MCF 10A (cell line): ENCODE measurements at regions of chr9 and their contacts with region 1.

Region 1: DNA sequence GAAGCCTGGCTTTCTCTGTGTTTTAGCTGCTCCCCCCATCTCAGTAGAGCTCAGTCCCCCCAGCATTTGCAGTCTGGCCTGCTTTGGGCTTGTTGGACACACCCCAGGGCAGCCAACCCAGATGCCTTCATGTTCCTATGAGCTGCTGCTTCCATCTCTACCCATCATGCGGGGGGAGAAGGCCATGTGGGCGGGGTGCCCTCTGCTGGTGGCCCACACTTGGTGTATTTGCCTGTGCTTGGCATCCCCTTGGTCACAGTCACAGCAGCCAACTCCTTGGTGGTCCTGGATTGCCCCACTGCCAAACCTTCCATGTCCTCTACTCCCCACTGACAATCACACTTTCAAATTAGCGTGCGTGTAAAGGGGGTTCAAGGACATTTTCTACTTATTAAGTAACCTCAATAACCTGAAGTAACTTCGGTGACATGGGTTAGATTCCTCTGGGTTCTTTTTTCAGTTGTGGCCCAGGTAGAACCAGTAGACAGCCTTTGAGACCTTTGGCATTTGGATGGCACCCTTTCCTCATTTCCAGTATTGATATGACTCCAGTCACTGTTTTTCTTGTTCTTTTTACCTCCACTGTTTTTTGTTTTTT is 42.8 kb downstream of the SNX30 start:
- DNase-seq: peak; percentile 71
- H3K4me3 Mint-ChIP-seq: no peak overlapping the region
- H3K27ac Mint-ChIP-seq: no peak overlapping the region
- H3K4me1 Mint-ChIP-seq: no peaks in the 10 kb centered on the region
- H3K27me3 Mint-ChIP-seq: no peaks in the 10 kb centered on the region
- CTCF ChIP-seq: peak; percentile 66

Region 2: GRCh38 chr9:111263116-111263515 is 1530.2 kb before region 1 on chr9:
- CTCF ChIA-PET with region 1: no interaction called
- POLR2A ChIA-PET with region 1: no interaction called
- intact Hi-C with region 1: no loop called
- DNase-seq: no peak
- H3K4me3 Mint-ChIP-seq: no peak overlapping the region
- H3K27ac Mint-ChIP-seq: no peak overlapping the region
- H3K4me1 Mint-ChIP-seq: no peaks in the 10 kb centered on the region
- H3K27me3 Mint-ChIP-seq: no peaks in the 10 kb centered on the region
- CTCF ChIP-seq: no peak

Region 3: GRCh38 chr9:112443200-112443599 is 350.1 kb before region 1 on chr9:
- CTCF ChIA-PET with region 1: interaction called, 3 read pairs
- POLR2A ChIA-PET with region 1: interaction called, 3 read pairs
- intact Hi-C with region 1: loop called (anchors 1 kb)
- DNase-seq: peak; percentile 24
- H3K4me3 Mint-ChIP-seq: no peak overlapping the region
- H3K27ac Mint-ChIP-seq: no peak overlapping the region
- H3K4me1 Mint-ChIP-seq: peaks cover 14% of the 10 kb centered on the region
- H3K27me3 Mint-ChIP-seq: no peaks in the 10 kb centered on the region
- CTCF ChIP-seq: peak; percentile 29

Region 4: DNA sequence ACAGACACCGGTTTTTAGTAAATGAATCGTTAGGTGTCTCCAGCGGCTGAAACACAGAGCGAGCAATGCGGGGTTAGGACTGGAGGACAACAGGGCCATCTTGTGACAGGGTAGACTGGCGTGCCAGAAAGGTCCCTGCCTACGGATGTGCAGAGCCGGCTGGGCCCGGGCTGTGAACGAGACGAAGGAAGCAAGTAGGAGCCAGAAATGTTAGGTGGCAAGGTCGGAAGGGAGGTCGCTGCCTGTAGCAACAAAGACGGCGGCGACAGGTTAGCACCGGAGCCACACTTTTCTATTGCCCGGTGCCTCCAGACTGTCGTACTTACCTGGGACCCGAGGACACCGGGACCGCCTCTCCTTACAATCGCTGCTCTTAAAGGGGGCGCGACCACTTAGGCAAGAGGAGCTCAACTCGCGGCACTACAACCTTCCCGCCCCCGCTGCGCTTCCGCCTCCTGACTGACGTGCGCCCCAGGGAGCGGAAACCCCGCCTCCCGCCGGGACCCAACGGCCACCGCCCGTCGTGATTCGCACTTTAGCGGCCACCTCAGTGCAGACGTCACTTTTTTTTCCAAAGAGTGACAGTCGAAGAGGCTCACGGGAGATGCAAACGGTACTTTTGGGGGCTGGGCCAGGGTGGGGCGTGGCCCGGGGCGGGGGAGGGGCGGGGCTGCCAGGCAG is 75.5 kb before region 1 on chr9 and contains the start of gene INIP:
- CTCF ChIA-PET with region 1: interaction called, 6 read pairs
- POLR2A ChIA-PET with region 1: no interaction called
- intact Hi-C with region 1: loop called (anchors 1 kb)
- DNase-seq: peak; percentile 97
- H3K4me3 Mint-ChIP-seq: peak within 1 kb of the TSS; percentile 100
- H3K27ac Mint-ChIP-seq: peak within 1 kb of the TSS; percentile 98
- H3K4me1 Mint-ChIP-seq: peaks cover 8% of the 10 kb centered on the region
- H3K27me3 Mint-ChIP-seq: no peaks in the 10 kb centered on the region
- CTCF ChIP-seq: peak; percentile 6
- total RNA-seq, gene INIP: 28.0 and 33.5 TPM in 2 replicates

Region 5: GRCh38 chr9:112750111-112750767 is 43.1 kb before region 1 on chr9 and contains the start of gene SNX30:
- CTCF ChIA-PET with region 1: interaction called, 3 read pairs
- POLR2A ChIA-PET with region 1: no interaction called
- intact Hi-C with region 1: loop called (anchors 1 kb)
- DNase-seq: peak; percentile 90
- H3K4me3 Mint-ChIP-seq: peak within 1 kb of the TSS; percentile 98
- H3K27ac Mint-ChIP-seq: peak within 1 kb of the TSS; percentile 98
- H3K4me1 Mint-ChIP-seq: peaks cover 23% of the 10 kb centered on the region
- H3K27me3 Mint-ChIP-seq: no peaks in the 10 kb centered on the region
- CTCF ChIP-seq: no peak
- total RNA-seq, gene SNX30: 9.0 and 9.6 TPM in 2 replicates